Heart left ventricle (tissue), 16 donors: ENCODE measurements at regions of chr17 and their contacts with region 1.

Region 1: DNA sequence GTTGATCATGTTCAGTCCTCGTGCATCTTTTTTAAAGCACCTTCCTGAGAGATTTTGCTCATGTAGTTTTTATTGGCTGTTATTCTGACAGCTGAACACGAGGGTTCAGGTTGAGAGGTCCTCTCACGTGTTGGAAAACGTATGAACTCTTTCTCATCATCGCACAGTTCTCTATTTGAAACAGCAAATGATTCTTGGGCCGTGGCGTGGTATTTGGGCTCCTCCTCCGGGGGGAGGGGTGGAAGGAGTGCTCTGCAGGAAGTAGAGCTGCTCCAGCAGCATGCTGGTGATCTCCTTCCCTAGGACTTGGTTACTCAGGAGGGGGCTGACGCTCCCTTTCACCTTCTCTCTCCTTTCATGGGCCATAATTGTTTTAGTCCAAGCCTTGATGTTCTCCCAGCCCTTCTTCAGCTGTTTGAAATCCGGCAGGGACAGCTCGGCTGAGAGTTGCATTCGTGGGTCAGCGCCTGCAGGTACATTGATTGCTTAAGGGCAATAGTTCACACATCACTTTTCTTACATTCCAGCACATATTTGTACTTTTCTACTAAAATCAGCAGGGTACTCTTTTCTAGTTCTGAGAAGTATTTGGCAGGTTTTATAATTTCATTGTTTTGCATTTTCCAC is 70.5 kb downstream of the KSR1 start:
- DNase-seq: peak in 2 of 5 donors; percentile 43 to 48
- ATAC-seq: peak in 3 of 4 donors; percentile 66 to 76 (median 71)
- H3K4me3 ChIP-seq: no peak overlapping the region
- H3K27ac ChIP-seq: peak overlapping the region in 1 of 12 donors; percentile 30
- H3K4me1 ChIP-seq: peaks cover 0 to 59% (median 5%) of the 10 kb centered on the region in 12 donors
- H3K27me3 ChIP-seq: no peaks in the 10 kb centered on the region
- CTCF ChIP-seq: no peak
- POLR2A ChIP-seq: no peak

Region 2: DNA sequence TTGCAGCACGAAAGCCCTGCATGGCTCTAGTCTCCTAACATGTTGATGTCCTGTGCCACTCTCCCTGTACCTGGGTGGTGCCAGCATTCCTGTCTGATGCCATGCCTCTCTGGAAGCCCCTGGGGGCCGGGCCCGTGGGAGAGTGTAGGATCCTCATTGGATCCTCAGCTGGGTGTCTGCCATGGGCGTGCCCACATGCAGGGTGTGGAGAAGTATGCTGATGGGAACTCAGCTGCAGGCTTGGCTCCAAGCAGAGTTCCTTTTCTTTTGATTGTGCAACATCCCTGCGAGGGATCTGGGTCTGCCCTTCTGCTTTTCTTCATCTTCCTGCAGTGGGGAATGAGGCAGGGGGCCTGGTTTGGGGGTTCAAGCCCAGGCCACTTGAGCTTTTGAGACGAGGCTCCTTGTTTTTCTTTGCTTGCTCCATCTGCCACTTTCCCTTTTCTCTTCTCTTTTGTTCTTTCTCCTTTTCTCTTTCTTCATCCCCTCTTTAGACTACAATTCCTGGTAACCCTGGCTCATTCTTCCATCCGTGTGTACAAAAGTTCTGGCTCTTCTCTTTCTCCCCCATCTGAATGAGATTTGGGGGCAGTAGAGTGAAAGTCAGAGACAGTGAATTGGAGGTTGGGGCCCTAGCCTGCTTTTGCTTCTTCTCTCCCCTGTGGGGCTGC is 37.5 kb before region 1 on chr17:
- intact Hi-C with region 1: loop called in 1 of 10 experiments (anchors 5 kb)
- DNase-seq: peak; percentile 59 to 93 (median 86)
- ATAC-seq: peak; percentile 71 to 91 (median 88)
- H3K4me3 ChIP-seq: no peak overlapping the region
- H3K27ac ChIP-seq: peak overlapping the region in 9 of 12 donors; percentile 1 to 86 (median 49)
- H3K4me1 ChIP-seq: peaks cover 0 to 64% (median 32%) of the 10 kb centered on the region in 12 donors
- H3K27me3 ChIP-seq: no peaks in the 10 kb centered on the region
- CTCF ChIP-seq: no peak
- POLR2A ChIP-seq: no peak

Region 3: GRCh38 chr17:27586203-27586721 is 59.5 kb after region 1 on chr17:
- intact Hi-C with region 1: no loop called
- DNase-seq: peak in 1 of 5 donors; percentile 27
- ATAC-seq: peak in 2 of 4 donors; percentile 29 to 54
- H3K4me3 ChIP-seq: no peak overlapping the region
- H3K27ac ChIP-seq: peak overlapping the region in 1 of 12 donors; percentile 17
- H3K4me1 ChIP-seq: no peaks in the 10 kb centered on the region
- H3K27me3 ChIP-seq: no peaks in the 10 kb centered on the region
- CTCF ChIP-seq: no peak
- POLR2A ChIP-seq: no peak

Region 4: DNA sequence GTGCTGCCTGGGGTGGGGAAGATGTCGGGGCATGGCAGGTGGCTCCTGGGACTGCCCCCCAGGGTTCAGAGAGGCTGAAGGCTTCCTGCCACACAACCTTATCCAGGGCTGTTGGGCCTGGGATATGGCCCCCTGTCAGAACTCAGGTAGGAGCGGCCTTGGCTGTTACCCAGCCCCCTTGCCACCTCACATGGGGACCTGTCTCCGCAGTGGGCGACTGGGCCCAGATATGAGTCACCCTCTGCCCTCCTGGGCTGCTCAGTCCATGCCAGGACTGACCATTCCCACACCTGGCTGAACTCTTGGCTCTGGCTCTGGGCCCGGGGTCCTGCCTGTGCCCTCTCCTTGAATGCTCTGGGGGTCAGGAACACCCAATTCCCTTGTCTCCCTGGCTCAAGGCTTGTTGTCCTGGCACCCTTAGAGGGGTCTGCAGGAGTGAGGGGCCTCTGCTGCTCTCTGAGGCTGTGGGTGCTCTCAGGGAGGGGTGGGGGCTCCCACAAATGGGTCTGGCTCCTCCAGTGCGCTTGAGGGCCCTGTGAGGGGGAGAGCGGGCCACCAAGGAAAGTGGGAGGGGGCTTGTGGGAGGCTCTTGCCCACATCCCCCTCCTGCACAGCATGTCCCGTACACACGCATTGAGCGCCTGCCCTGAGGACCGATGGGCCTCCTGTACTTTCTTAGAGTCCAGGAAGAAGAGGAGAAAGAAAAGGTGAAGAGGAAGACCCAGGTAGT is 140.3 kb after region 1 on chr17:
- intact Hi-C with region 1: no loop called
- DNase-seq: no peak
- ATAC-seq: no peak
- H3K4me3 ChIP-seq: no peak overlapping the region
- H3K27ac ChIP-seq: no peak overlapping the region
- H3K4me1 ChIP-seq: no peaks in the 10 kb centered on the region
- H3K27me3 ChIP-seq: no peaks in the 10 kb centered on the region
- CTCF ChIP-seq: no peak
- POLR2A ChIP-seq: no peak